Endothelial cell of umbilical vein (primary cell): ENCODE measurements at regions of chr10 and their contacts with region 1.

Region 1: GRCh38 chr10:95246579-95247051 is 44.2 kb downstream of the PDLIM1 start:
- DNase-seq: peak; percentile 76
- H3K4me3 ChIP-seq: no peak overlapping the region
- H3K27ac ChIP-seq: no peak overlapping the region
- H3K4me1 ChIP-seq: peaks cover 11% of the 10 kb centered on the region
- H3K27me3 ChIP-seq: no peaks in the 10 kb centered on the region
- CTCF ChIP-seq: peak; percentile 75 to 79
- POLR2A ChIP-seq: no peak

Region 2: GRCh38 chr10:94902570-94902969 is 344.0 kb before region 1 on chr10:
- CTCF ChIA-PET with region 1: no interaction called
- POLR2A ChIA-PET with region 1: no interaction called
- dilution Hi-C with region 1: no loop called
- intact Hi-C with region 1: no loop called
- DNase-seq: no peak
- H3K4me3 ChIP-seq: no peak overlapping the region
- H3K27ac ChIP-seq: no peak overlapping the region
- H3K4me1 ChIP-seq: no peaks in the 10 kb centered on the region
- H3K27me3 ChIP-seq: no peaks in the 10 kb centered on the region
- CTCF ChIP-seq: no peak
- POLR2A ChIP-seq: no peak

Region 3: GRCh38 chr10:94963901-94964300 is 282.7 kb before region 1 on chr10:
- CTCF ChIA-PET with region 1: interaction called, 12 read pairs
- POLR2A ChIA-PET with region 1: no interaction called
- dilution Hi-C with region 1: no loop called
- intact Hi-C with region 1: loop called (anchors 10 kb)
- DNase-seq: peak; percentile 19
- H3K4me3 ChIP-seq: no peak overlapping the region
- H3K27ac ChIP-seq: no peak overlapping the region
- H3K4me1 ChIP-seq: no peaks in the 10 kb centered on the region
- H3K27me3 ChIP-seq: no peaks in the 10 kb centered on the region
- CTCF ChIP-seq: peak; percentile 10 to 45
- POLR2A ChIP-seq: no peak

Region 4: DNA sequence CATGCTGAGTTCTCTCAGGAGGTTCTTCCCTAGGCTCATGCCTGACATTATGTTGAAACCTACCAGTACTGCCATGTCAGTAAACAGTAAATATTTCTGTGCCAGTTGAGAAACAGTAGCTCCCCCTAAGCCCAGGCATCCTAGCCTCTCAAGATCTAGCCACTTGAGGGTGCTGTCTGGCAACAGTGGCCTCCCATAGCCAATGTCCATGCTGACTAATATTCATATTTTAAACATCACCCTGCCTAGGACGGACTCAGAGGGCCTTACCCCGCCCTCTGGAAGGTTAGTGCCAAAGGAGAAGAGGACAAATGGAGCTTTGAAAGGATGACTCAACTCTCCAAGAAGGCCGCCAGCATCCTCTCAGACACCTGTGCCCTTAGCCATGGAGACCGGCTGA is 44.9 kb before region 1 on chr10:
- CTCF ChIA-PET with region 1: interaction called, 68 read pairs
- POLR2A ChIA-PET with region 1: no interaction called
- dilution Hi-C with region 1: no loop called
- intact Hi-C with region 1: no loop called
- DNase-seq: no peak
- H3K4me3 ChIP-seq: no peak overlapping the region
- H3K27ac ChIP-seq: no peak overlapping the region
- H3K4me1 ChIP-seq: no peaks in the 10 kb centered on the region
- H3K27me3 ChIP-seq: peaks cover 0 to 1% of the 10 kb centered on the region in 2 experiments
- CTCF ChIP-seq: peak in 1 of 2 donors; percentile 7
- POLR2A ChIP-seq: no peak

Region 5: GRCh38 chr10:95266674-95267095 is 20.1 kb after region 1 on chr10:
- CTCF ChIA-PET with region 1: interaction called, 9 read pairs
- POLR2A ChIA-PET with region 1: no interaction called
- dilution Hi-C with region 1: no loop called
- intact Hi-C with region 1: loop called (anchors 2 kb)
- DNase-seq: peak; percentile 91
- H3K4me3 ChIP-seq: no peak overlapping the region
- H3K27ac ChIP-seq: peak overlapping the region; percentile 74
- H3K4me1 ChIP-seq: peaks cover 30% of the 10 kb centered on the region
- H3K27me3 ChIP-seq: no peaks in the 10 kb centered on the region
- CTCF ChIP-seq: no peak
- POLR2A ChIP-seq: no peak

Region 6: GRCh38 chr10:95333997-95334804 is 87.6 kb after region 1 on chr10:
- CTCF ChIA-PET with region 1: interaction called, 9 read pairs
- POLR2A ChIA-PET with region 1: no interaction called
- dilution Hi-C with region 1: no loop called
- intact Hi-C with region 1: loop called (anchors 1 kb)
- DNase-seq: peak; percentile 89
- H3K4me3 ChIP-seq: no peak overlapping the region
- H3K27ac ChIP-seq: peak overlapping the region; percentile 96
- H3K4me1 ChIP-seq: peaks cover 30% of the 10 kb centered on the region
- H3K27me3 ChIP-seq: no peaks in the 10 kb centered on the region
- CTCF ChIP-seq: no peak
- POLR2A ChIP-seq: peak; percentile 57